CD8-positive, alpha-beta T cell (primary cell): ENCODE measurements at regions of chr6 and their contacts with region 1.

Region 1: GRCh38 chr6:108268845-108269244 is 8.0 kb upstream of the SNX3 start:
- DNase-seq: no peak
- ATAC-seq: no peak
- H3K4me3 ChIP-seq: no peak overlapping the region
- H3K4me3 Mint-ChIP-seq: no peak overlapping the region
- H3K27ac ChIP-seq: no peak overlapping the region
- H3K27ac Mint-ChIP-seq: no peak overlapping the region
- H3K4me1 ChIP-seq: no peaks in the 10 kb centered on the region
- H3K4me1 Mint-ChIP-seq: no peaks in the 10 kb centered on the region
- H3K27me3 ChIP-seq: no peaks in the 10 kb centered on the region
- H3K27me3 Mint-ChIP-seq: peaks cover 2% of the 10 kb centered on the region
- CTCF ChIP-seq: no peak

Region 2: DNA sequence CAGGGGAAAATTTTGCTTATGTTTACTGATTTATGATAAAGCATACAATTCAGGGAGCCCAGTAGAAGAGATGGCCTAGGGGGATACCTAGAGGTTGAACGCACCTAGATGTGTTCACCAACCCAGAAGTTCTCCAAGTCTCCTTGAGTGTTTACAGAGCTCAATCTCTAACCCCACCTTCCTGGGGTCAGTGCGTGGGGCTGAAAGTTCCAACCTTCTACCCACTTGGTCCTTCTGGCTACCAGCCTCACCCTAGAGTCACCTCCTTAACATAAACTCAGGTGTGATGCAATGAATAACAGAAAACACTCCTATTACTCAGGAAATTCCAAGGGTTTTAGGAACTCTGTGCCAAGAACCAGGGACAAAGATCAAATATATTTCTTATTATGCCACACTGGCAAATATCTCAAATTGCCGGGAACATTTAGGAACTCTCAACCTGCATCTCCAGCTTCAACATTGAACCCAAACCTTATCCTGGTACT is 52.5 kb after region 1 on chr6:
- CTCF ChIA-PET with region 1: no interaction called
- POLR2A ChIA-PET with region 1: no interaction called
- intact Hi-C with region 1: no loop called
- DNase-seq: no peak
- ATAC-seq: no peak
- H3K4me3 ChIP-seq: no peak overlapping the region
- H3K4me3 Mint-ChIP-seq: no peak overlapping the region
- H3K27ac ChIP-seq: no peak overlapping the region
- H3K27ac Mint-ChIP-seq: no peak overlapping the region
- H3K4me1 ChIP-seq: no peaks in the 10 kb centered on the region
- H3K4me1 Mint-ChIP-seq: no peaks in the 10 kb centered on the region
- H3K27me3 ChIP-seq: no peaks in the 10 kb centered on the region
- H3K27me3 Mint-ChIP-seq: no peaks in the 10 kb centered on the region
- CTCF ChIP-seq: no peak

Region 3: DNA sequence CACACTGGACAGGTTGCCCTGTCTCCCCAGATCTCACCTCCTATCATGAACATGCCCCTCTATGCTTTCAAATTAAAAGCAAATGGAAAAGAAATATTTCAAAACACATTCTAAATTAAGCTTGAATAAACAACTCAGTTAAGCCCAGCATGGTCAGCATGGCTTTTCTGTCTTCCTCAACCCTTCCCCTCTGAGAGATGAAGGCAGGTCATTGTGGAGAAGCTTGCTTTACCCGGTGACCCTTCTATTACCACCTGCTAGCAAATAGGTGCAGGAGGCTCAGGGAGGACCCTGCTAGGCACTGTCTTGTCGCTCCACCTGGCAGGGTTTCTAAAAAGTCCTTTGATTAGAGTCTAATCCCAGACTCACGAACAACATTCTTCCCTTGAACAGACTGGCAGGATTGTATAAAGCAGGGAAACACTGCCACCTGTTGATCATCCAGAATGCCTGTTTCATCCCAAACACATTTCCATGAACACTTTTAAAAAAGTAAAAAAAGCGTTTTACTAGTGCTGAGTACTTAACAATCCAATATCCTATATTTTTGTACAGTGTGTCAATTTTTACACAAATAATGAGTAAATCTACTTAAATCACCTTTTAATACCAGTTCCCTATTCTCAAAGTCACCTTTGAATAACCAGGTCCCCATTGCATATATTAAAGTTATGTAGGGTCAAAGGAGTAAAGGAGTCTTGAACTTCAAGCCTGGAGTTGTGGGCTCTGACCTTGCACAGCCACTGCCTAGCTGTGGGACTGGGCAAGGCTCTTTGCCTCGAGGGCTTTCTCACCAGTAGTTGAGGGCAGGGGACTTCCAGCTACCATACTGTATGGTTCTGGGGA is 1784.8 kb after region 1 on chr6:
- CTCF ChIA-PET with region 1: no interaction called
- POLR2A ChIA-PET with region 1: no interaction called
- intact Hi-C with region 1: loop called in 1 of 2 experiments (anchors 5 kb)
- DNase-seq: peak in 2 of 9 experiments; percentile 43 to 56
- ATAC-seq: no peak
- H3K4me3 ChIP-seq: no peak overlapping the region
- H3K4me3 Mint-ChIP-seq: no peak overlapping the region
- H3K27ac ChIP-seq: no peak overlapping the region
- H3K27ac Mint-ChIP-seq: no peak overlapping the region
- H3K4me1 ChIP-seq: no peaks in the 10 kb centered on the region
- H3K4me1 Mint-ChIP-seq: no peaks in the 10 kb centered on the region
- H3K27me3 ChIP-seq: no peaks in the 10 kb centered on the region
- H3K27me3 Mint-ChIP-seq: peaks cover 2% of the 10 kb centered on the region
- CTCF ChIP-seq: peak; percentile 41